Mucosa of descending colon (tissue), 3 donors: ENCODE measurements at regions of chr4 and their contacts with region 1.

Region 1: DNA sequence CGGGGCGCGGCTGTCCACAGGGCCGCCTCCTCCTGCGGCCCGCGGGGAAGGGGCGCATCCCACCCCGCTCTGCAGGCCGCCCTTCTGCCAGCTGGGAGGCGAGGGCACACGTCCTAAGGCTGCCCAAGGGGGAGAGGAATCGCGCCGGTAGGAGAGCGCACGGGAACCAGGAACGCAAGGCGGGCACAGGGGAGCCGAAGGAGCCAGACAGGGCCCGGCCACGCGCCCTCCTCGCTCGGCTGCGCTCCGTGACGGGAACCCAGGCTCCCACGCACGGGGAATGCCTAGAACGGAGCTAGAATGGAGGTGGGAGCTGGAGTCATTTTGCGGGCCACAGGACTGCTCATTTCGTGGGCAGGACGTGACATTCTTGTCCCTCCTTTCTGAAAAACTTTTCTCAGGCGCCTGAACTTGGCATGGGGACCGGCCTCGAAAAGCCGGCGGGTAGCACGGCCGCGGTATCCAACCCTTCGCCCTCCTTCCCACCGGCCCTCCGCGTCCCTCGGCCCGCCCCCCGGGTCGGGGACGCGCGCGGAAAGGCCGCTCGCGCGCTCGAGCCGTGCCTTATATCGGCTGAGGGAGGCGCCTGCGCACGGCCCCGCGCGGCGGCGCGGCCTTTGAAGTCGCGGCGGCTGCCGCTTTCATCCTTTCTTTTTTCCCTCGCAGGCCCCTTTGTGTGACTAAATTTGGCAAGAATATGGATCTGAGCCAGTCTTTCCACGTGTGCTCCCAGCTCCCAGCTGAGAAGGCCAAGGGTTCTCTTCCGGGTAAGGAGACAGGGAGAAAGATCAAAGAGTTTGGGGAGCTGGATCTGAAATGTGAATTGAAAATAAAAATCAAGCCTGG is 4.2 kb upstream of the LEF1 start:
- DNase-seq: peak; percentile 40 to 62 (median 61)
- ATAC-seq: peak; percentile 74
- H3K4me3 ChIP-seq: no peak overlapping the region
- H3K4me1 ChIP-seq: peaks cover 32% of the 10 kb centered on the region
- CTCF ChIP-seq: no peak

Region 2: GRCh38 chr4:108611365-108611764 is 438.4 kb after region 1 on chr4:
- intact Hi-C with region 1: loop called in 1 of 2 experiments (anchors 5 kb)
- DNase-seq: no peak
- ATAC-seq: no peak
- H3K4me3 ChIP-seq: no peak overlapping the region
- H3K4me1 ChIP-seq: no peaks in the 10 kb centered on the region
- CTCF ChIP-seq: no peak